Posterior cingulate gyrus (tissue), 11 donors: ENCODE measurements at regions of chr1 and their contacts with region 1.

Region 1: DNA sequence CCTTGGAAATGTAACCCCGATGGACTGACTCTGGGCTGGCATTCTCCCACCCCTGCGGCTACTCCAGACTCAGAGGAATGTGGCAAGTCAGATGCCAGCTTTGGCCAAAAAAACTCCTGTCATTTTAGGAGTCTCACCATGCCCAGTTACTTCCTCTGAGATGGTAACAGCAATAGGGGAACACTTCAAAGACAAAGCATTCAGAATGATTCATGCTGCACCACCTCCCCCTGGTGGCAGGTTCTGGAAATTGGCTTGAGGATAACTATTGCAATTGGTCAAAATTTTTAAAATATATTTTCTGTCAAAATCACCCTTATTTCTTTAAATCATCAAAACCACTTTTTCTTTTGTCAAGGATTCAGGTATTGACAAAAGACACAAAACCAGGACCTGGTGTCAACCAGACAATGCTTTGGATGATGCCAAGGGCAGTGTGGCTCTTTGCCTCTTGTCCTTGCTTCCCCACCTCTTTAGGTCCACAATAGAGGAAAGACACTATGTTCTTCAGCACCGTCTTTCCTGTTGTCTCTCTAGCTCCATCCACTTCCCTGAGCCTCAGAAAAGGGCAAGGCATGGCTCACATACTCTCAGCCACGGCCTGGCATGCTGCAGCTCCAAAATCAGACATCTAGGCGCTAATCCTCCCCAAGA is 9.9 kb upstream of the CDCA8 start:
- DNase-seq: peak; percentile 54 to 95 (median 80)

Region 2: GRCh38 chr1:37453647-37454046 is 228.8 kb before region 1 on chr1:
- intact Hi-C with region 1: loop called (anchors 1 kb)
- DNase-seq: peak in 1 of 10 donors; percentile 42

Region 3: DNA sequence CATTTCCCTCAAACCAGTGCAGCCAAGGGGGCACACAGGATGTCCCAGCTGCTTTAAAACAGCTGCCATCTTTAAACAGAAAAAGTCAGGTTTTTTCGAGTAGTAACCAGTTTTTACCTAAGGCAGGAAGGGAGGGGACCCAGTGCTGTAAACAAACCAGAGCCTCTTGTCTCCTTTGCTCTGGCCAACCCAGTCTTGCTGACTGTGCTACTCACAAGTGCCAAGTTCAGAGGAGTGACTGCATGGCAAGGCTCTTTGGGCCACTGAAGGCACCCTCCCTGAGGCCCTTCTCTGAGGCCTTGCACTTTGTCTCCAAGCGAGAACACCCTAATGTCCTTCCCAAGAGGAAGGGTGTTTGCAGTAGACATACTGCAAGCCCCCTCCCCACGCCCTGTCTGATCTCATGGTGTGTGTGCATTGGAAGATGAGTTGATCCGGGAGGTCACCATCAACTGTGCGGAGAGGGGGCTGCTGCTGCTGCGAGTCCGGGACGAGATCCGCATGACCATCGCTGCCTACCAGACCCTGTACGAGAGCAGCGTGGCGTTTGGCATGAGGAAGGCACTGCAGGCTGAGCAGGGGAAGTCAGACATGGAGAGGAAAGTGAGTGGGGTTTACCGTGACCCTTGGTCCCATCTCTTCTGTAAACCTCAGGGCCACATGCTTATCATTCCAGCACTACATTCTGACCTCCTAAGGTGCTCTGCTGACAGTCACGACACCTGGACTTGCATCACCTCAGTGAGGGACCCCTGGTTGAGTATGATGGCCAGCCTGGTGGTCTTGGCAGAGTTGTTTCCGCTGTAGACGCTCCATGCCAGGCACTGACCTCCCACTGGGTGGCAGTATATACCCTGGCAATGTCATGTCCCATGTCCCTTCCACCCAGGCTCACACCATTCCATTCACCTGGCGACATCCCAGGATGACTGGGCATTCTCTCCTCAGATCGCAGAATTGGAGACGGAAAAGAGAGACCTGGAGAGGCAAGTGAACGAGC is 121.0 kb before region 1 on chr1:
- intact Hi-C with region 1: no loop called
- DNase-seq: peak in 1 of 10 donors; percentile 54

Region 4: DNA sequence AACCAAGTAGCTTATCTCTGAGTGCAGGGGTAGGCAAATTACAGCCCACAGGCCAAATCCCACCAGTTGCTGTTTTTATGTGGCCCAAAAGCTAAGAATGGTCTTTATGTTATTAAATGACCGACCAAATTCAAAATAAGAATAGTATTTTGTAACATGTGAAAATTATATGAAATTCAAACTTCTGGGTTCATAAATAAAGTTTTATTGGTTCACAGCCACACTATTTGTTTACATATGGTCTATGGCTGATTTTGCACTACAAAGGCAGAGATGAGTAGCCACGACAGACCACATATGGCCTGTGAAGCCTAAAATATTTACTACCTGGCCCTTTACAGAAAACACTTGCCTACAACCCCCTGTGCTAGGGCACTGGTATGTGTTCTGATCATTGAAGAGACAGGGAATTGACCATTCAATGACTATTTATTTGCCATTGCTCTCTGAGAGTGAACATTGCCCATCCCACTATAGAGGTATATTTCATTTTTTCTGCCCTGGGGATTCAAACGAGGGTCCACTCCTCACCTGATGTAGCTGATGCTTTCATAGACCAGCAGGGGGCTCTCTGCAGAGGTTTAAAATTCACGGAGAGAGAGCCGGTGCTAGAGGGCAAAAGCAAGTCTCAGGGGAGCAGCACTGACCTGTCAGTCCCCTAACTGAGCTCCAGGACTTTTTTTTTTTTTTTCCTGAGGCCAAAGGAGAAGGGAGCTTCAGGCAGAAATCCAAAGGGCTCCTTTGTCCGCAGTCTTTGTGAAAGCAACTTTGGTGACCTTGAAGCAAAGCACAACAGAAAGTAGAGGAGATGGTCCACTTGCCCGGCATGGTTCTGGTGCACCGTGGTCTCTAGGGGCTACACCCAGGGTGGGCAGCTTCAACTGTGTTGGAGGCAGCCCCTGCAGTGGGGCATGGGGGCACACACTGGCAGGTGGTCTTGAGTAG is 79.4 kb before region 1 on chr1:
- intact Hi-C with region 1: loop called (anchors 5 kb)
- DNase-seq: peak in 1 of 10 donors; percentile 13

Region 5: GRCh38 chr1:37650173-37650572 is 32.3 kb before region 1 on chr1:
- intact Hi-C with region 1: no loop called
- DNase-seq: peak in 1 of 10 donors; percentile 45

Region 6: GRCh38 chr1:38873027-38873969 is 1190.8 kb after region 1 on chr1 and contains the start of gene MYCBP:
- intact Hi-C with region 1: no loop called
- DNase-seq: peak; percentile 94 to 100 (median 96)